CD4-positive, alpha-beta memory T cell (primary cell): ENCODE measurements at regions of chr1 and their contacts with region 1.

Region 1: GRCh38 chr1:156500797-156501499 is 373 bp upstream of the MEF2D start:
- DNase-seq: peak; percentile 91 to 96 (median 93)
- H3K4me3 ChIP-seq: peak overlapping the region; percentile 79 to 85
- H3K4me3 Mint-ChIP-seq: peak overlapping the region; percentile 90 to 98 (median 94)
- H3K27ac ChIP-seq: peak overlapping the region; percentile 94
- H3K27ac Mint-ChIP-seq: peak overlapping the region; percentile 96 to 100 (median 99)
- H3K4me1 ChIP-seq: peaks cover 78% of the 10 kb centered on the region
- H3K4me1 Mint-ChIP-seq: peaks cover 63 to 83% (median 71%) of the 10 kb centered on the region in 4 donors
- H3K27me3 ChIP-seq: no peaks in the 10 kb centered on the region
- H3K27me3 Mint-ChIP-seq: peaks cover 0 to 2% of the 10 kb centered on the region in 2 donors

Region 2: GRCh38 chr1:156383023-156383422 is 117.9 kb before region 1 on chr1:
- CTCF ChIA-PET with region 1: interaction called, 10 read pairs
- POLR2A ChIA-PET with region 1: no interaction called
- intact Hi-C with region 1: no loop called
- DNase-seq: peak; percentile 37 to 58 (median 44)
- H3K4me3 ChIP-seq: no peak overlapping the region
- H3K4me3 Mint-ChIP-seq: no peak overlapping the region
- H3K27ac ChIP-seq: no peak overlapping the region
- H3K27ac Mint-ChIP-seq: no peak overlapping the region
- H3K4me1 ChIP-seq: peaks cover 6% of the 10 kb centered on the region
- H3K4me1 Mint-ChIP-seq: peaks cover 4 to 14% (median 7%) of the 10 kb centered on the region in 4 donors
- H3K27me3 ChIP-seq: no peaks in the 10 kb centered on the region
- H3K27me3 Mint-ChIP-seq: peaks cover 7 to 12% of the 10 kb centered on the region in 2 donors

Region 3: DNA sequence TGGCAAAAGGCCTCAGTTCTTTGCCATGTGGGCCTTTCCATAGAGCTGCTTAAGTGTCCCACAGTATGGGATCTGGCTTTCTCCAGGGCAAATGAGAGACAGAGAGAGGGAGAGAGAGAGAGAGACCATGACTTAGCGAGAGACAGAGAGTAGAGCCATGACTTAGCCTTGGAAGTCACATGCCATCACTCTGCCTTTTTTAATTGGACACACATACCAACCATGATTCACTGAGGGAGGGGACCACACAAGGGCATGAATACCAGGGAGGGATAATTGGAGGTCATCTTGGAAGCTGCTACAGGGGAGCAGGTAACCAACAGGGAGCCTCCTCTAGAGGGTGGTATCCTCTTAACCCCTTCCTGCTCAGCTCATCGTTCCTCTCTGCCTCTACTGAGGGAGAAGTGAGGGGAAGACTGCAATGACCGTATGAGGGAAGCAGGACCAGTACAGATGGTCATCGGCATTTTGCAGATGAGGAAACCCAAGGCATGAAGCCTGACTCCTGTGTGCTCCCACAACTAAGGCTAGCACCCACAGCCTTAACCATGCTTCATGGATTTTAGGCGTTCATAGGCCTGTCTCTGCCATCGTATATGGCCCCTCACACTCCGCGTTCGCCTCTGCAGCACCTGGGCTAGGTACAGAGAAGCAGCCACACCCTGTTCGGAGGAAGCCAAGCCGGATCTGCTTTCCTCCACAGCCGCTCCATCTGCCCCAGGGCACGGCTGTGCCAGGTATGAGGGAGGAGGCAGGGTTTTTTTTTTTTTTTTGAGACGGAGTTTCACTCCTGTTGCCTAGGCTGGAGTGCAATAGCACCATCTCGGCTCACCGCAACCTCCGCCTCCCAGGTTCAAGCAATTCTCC is 38.9 kb before region 1 on chr1:
- CTCF ChIA-PET with region 1: interaction called, 9 read pairs
- POLR2A ChIA-PET with region 1: interaction called, 90 read pairs
- intact Hi-C with region 1: loop called (anchors 1 kb)
- DNase-seq: no peak
- H3K4me3 ChIP-seq: no peak overlapping the region
- H3K4me3 Mint-ChIP-seq: no peak overlapping the region
- H3K27ac ChIP-seq: no peak overlapping the region
- H3K27ac Mint-ChIP-seq: peak overlapping the region in 6 of 7 donors; percentile 13 to 69 (median 60)
- H3K4me1 ChIP-seq: peaks cover 23% of the 10 kb centered on the region
- H3K4me1 Mint-ChIP-seq: peaks cover 12 to 30% (median 18%) of the 10 kb centered on the region in 4 donors
- H3K27me3 ChIP-seq: no peaks in the 10 kb centered on the region
- H3K27me3 Mint-ChIP-seq: no peaks in the 10 kb centered on the region

Region 4: GRCh38 chr1:156524481-156524869 is 23.5 kb after region 1 on chr1:
- CTCF ChIA-PET with region 1: interaction called, 8 read pairs
- POLR2A ChIA-PET with region 1: interaction called, 15 read pairs
- intact Hi-C with region 1: no loop called
- DNase-seq: no peak
- H3K4me3 ChIP-seq: no peak overlapping the region
- H3K4me3 Mint-ChIP-seq: peak overlapping the region in 4 of 8 donors; percentile 2 to 52 (median 16)
- H3K27ac ChIP-seq: no peak overlapping the region
- H3K27ac Mint-ChIP-seq: peak overlapping the region in 4 of 7 donors; percentile 1 to 87 (median 28)
- H3K4me1 ChIP-seq: peaks cover 29% of the 10 kb centered on the region
- H3K4me1 Mint-ChIP-seq: peaks cover 16 to 33% (median 27%) of the 10 kb centered on the region in 4 donors
- H3K27me3 ChIP-seq: no peaks in the 10 kb centered on the region
- H3K27me3 Mint-ChIP-seq: no peaks in the 10 kb centered on the region

Region 5: DNA sequence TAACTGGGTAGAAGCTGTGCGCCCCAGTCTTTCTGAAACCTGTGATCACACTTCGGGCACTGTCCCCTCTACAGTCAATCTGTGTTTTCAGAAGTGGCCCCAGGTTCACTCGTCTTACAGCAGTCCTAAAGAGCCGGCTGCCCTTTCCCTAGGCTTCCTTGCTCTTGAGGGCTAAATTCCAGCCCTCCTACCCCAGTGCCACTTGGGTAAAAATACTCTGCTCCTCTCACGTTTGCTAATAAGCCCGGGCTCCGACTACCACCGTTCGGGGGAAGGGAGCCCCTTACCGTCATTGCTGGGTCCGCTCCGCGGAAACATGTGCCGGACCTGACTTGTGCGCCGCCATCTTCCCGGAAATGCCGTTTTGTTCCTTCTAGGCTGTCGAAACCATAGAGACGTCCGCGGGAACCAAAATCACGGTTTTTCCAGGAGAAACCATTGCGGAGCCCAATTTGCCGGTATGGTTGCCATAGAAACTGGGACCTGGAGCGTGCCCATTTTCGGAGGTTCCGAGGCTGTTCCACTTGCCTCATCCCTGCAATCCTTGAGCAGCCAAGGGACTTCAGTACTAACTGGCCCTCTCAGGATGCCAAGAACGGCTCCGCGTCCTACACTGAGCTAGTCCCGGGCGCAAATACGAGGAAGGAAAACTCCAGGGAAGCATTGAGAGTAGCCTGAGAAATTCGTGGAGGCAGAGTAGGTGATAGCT is 100.3 kb after region 1 on chr1 and contains the start of gene GPATCH4:
- CTCF ChIA-PET with region 1: interaction called, 4 read pairs
- POLR2A ChIA-PET with region 1: interaction called, 13 read pairs
- intact Hi-C with region 1: loop called (anchors 2 kb)
- DNase-seq: peak; percentile 75 to 82 (median 76)
- H3K4me3 ChIP-seq: peak within 1 kb of the TSS; percentile 82 to 83
- H3K4me3 Mint-ChIP-seq: peak within 1 kb of the TSS; percentile 90 to 100 (median 99)
- H3K27ac ChIP-seq: peak within 1 kb of the TSS; percentile 83
- H3K27ac Mint-ChIP-seq: peak within 1 kb of the TSS; percentile 83 to 100 (median 98)
- H3K4me1 ChIP-seq: peaks cover 30% of the 10 kb centered on the region
- H3K4me1 Mint-ChIP-seq: peaks cover 13 to 37% (median 26%) of the 10 kb centered on the region in 4 donors
- H3K27me3 ChIP-seq: no peaks in the 10 kb centered on the region
- H3K27me3 Mint-ChIP-seq: no peaks in the 10 kb centered on the region
- total RNA-seq, gene GPATCH4: 26.9 to 30.7 TPM

Region 6: DNA sequence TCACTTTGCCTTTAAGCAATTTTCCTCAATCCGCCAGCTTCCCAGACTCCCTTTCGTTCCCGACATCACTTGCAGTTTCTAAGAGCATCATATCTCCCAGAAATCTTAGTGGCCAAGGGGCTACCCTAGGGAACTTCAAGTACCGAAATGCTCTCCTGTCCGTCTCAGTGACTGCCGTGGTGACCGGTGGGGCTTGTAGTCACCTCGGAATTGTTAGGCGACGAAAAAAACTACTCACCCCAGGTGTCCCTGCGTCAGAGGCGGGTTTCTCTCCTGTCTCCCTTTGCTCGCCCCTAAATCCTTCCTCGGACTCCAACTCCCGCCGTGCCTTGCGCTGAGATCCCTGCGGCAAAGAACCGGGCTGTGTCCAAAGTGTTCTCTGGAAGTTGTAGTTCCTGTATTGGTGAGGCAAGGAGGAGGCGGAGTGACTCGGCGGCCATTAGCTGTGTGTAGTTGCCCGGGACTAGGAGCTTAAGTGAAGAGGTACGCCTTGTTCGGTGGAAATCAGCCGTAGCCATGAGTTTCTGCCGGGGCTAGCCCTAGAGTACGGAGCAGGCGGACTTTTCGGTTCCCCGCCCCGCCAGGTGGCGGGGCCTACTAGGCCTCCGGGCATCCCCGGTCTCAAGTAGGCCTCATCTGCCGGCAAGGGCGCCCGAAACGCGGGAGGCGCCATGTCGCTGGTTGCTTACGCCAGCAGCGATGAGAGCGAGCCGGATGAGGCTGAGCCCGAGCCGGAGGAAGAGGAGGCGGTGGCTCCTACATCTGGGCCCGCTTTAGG is 266.3 kb after region 1 on chr1 and contains the start of gene PRCC:
- CTCF ChIA-PET with region 1: no interaction called
- POLR2A ChIA-PET with region 1: interaction called, 8 read pairs
- intact Hi-C with region 1: loop called (anchors 1 kb)
- DNase-seq: peak; percentile 97 to 100 (median 99)
- H3K4me3 ChIP-seq: peak within 1 kb of the TSS; percentile 98 to 99
- H3K4me3 Mint-ChIP-seq: no peak within 1 kb of the TSS
- H3K27ac ChIP-seq: peak within 1 kb of the TSS; percentile 98
- H3K27ac Mint-ChIP-seq: no peak within 1 kb of the TSS
- H3K4me1 ChIP-seq: peaks cover 48% of the 10 kb centered on the region
- H3K4me1 Mint-ChIP-seq: peaks cover 24 to 39% (median 34%) of the 10 kb centered on the region in 4 donors
- H3K27me3 ChIP-seq: no peaks in the 10 kb centered on the region
- H3K27me3 Mint-ChIP-seq: no peaks in the 10 kb centered on the region
- total RNA-seq, gene PRCC: 60.9 to 61.3 TPM